ENCODE measurements at regions of chr20 and their contacts with region 1.

Region 1: GRCh38 chr20:37534401-37535157 is 6.9 kb upstream of the BLCAP start:
- DNase-seq: no peak
- ATAC-seq: peak; percentile 93

Region 2: DNA sequence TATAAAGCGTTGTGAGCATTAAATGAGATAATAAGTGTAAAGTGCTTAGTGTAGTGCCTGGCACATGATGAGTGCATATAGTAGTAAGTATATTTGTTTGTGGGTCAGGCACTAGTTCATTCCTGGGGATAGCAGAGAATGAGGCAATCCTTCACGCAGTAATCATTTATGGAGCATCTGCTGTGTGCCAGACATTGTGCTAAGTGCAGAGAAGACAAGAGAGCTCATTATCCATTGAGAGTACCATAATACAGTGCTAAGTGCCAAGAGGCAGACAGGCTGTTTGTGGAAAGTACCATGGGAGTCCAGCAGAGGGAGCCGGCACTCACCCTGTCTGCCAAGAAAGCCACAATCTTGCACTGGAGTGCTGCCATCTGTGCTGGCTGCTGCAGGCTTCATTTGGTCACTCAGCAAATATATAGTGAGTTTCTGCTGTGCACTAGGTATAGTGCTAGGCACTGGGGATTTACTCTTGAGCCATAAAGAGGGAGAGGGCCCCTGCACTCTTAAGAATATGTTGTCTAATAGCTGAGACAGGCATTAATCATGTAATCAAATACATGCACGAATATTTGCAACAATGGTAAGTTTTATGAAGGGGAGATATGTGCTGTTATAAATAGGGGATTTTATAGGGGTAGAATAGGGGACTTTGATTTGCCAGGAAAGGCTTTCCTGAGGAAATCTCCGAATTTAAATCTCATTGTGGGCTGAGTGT is 342.3 kb before region 1 on chr20:
- intact Hi-C with region 1: loop called (anchors 5 kb)
- DNase-seq: peak; percentile 93
- ATAC-seq: peak; percentile 94

Region 3: GRCh38 chr20:37270576-37271420 is 263.8 kb before region 1 on chr20:
- intact Hi-C with region 1: loop called (anchors 2 kb)
- DNase-seq: no peak
- ATAC-seq: peak; percentile 50

Region 4: GRCh38 chr20:37336369-37337207 is 198.0 kb before region 1 on chr20:
- intact Hi-C with region 1: no loop called
- DNase-seq: peak; percentile 72
- ATAC-seq: peak; percentile 70

Region 5: GRCh38 chr20:37384683-37385174 is 149.8 kb before region 1 on chr20:
- intact Hi-C with region 1: loop called (anchors 5 kb)
- DNase-seq: peak; percentile 83
- ATAC-seq: peak; percentile 91

Region 6: DNA sequence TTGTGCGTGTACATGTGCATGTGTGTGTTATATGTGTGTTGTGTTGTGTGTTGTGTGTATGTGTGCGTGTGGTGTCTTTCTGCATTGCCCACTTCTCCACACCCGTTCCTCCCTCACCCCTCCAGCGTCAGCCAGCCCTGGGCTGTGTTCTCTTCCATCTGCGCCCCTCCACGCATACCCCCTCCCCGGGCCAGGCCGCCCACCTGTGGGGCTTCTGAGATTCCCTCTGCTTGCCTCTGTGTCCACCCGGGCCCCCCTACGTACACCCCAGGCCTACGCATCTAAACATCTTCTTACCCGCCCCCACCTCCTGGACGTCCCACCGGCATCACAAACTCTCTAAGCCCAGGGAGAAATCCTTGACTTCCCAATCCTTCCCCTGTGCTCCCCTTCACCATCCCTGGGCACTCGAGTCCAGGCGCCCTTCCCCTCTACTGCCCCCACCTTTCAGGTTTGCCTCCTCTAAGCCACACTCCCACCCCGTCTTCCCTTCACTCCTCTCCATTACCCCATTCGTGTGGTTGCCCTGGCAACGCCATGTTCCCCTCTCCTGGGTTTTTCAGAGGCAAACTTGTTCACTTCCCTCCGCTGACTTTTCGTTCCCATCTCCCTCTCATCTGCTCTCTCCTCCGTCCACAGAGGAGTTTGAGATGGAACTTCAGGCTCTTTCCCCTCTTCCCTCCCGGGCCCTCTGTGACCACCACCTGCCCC is 95.2 kb before region 1 on chr20:
- intact Hi-C with region 1: no loop called
- DNase-seq: no peak
- ATAC-seq: no peak

Region 7: DNA sequence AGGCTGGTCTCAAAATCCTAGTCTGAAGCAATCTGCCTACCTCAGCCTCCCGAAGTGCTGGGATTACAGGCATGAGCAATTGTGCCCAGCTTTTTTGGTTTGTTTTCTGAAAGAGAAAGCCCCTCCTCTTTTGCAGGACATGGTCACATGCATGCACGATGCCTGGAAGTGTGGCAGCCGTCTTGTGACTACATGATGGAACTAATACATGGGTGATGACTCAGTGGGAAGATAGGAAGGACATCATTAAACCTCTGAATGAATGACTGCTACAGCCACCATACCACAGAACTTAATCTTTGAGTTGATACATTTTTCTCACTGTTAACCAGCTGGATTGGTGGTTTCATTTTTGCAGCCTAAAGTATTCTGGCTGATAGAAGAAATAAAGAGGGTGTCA is 145.8 kb after region 1 on chr20:
- intact Hi-C with region 1: no loop called
- DNase-seq: no peak
- ATAC-seq: no peak